Transverse colon (tissue), 4 donors: ENCODE measurements at regions of chr2 and their contacts with region 1.

Region 1: GRCh38 chr2:100416935-100417710 is at the start of gene CHST10:
- DNase-seq: peak; percentile 33
- H3K4me3 ChIP-seq: peak within 1 kb of the TSS; percentile 54 to 78 (median 68)
- H3K27ac ChIP-seq: peak within 1 kb of the TSS; percentile 73 to 84 (median 78)
- H3K4me1 ChIP-seq: peaks cover 0 to 17% (median 6%) of the 10 kb centered on the region in 4 donors
- H3K27me3 ChIP-seq: peaks cover 21% of the 10 kb centered on the region
- CTCF ChIP-seq: no peak
- EP300 ChIP-seq: no peak
- POLR2A ChIP-seq: no peak
- total RNA-seq, gene CHST10: 1.1 to 7.8 (median 4.0) TPM

Region 2: GRCh38 chr2:100352521-100352920 is 64.6 kb before region 1 on chr2:
- in situ Hi-C with region 1: no loop called
- intact Hi-C with region 1: no loop called
- DNase-seq: no peak
- H3K4me3 ChIP-seq: no peak overlapping the region
- H3K27ac ChIP-seq: no peak overlapping the region
- H3K4me1 ChIP-seq: no peaks in the 10 kb centered on the region
- H3K27me3 ChIP-seq: no peaks in the 10 kb centered on the region
- CTCF ChIP-seq: no peak
- EP300 ChIP-seq: no peak
- POLR2A ChIP-seq: no peak

Region 3: DNA sequence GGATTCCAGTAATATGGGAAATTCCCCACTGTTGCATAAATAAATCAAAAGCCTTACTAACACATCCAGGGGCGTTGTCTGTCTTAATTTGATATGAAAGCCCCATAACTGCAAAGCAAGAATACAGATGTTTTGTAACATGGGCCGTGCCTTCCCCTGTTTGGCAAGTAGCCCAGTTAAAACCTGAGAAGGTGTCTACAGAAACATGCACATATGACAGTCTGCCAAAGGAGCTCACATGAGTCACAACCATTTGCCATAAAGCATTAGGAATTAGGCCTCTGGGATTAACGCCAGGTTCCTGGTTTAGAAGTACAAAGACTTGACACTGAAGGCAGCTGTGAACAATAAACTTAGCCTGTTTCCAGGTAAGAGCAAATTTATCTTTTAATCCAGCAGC is 51.7 kb before region 1 on chr2:
- in situ Hi-C with region 1: no loop called
- intact Hi-C with region 1: loop called (anchors 2 kb)
- DNase-seq: no peak
- H3K4me3 ChIP-seq: no peak overlapping the region
- H3K27ac ChIP-seq: no peak overlapping the region
- H3K4me1 ChIP-seq: no peaks in the 10 kb centered on the region
- H3K27me3 ChIP-seq: no peaks in the 10 kb centered on the region
- CTCF ChIP-seq: no peak
- EP300 ChIP-seq: no peak
- POLR2A ChIP-seq: no peak

Region 4: DNA sequence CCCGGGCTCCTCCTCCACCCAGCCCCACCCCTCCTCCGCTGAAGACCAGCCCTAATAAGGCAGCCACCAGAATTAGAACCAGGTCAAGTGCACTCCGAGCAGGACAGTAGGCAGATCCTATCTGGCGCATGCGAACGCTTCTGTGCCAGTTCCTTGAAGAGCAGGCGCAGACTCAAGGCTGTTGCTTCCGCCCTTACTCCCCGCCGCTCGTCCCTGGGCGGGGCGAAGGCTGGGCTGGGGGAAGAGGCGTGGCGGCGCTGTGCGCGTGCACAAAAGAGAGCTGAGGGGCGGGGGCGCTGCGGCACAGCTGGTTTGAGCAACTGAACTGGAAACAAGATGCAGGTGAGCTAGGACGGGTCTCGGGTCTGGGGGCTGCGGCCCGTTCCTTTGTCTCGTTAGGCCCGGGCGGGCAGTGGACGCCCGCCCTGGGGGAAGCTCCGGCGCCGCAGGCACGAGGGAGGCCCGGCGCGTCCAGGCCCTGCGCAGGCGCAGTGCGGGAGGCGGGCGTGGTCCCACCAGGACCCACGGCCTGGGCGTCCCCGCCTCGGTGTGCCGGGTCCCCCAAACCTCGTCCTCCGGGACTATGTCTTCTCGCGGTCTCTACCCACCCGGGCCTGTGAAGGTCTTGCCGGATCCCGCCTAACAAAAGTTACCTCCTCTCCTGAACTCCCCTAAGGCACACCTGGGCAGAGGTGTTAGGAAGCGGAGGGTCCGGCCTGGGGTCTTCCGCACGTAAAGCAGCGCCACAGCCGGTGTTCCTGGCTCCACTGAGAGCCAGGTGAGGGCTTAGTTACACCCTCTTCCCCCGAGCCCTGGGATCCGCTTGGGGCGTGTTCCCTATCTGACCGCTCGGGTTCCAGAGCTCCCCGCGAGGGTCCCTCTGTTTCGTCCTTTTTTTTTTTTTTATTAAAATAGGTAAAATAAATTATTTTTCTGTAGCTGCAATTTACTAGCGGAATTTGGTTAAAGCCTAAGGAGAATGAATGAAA is 145.9 kb after region 1 on chr2 and contains the start of gene PDCL3:
- in situ Hi-C with region 1: no loop called
- intact Hi-C with region 1: loop called (anchors 5 kb)
- DNase-seq: peak; percentile 96
- H3K4me3 ChIP-seq: peak within 1 kb of the TSS; percentile 63 to 73 (median 66)
- H3K27ac ChIP-seq: peak within 1 kb of the TSS; percentile 94 to 96 (median 95)
- H3K4me1 ChIP-seq: peaks cover 0 to 16% (median 11%) of the 10 kb centered on the region in 4 donors
- H3K27me3 ChIP-seq: no peaks in the 10 kb centered on the region
- CTCF ChIP-seq: peak in 1 of 5 experiments; percentile 25
- EP300 ChIP-seq: no peak
- POLR2A ChIP-seq: peak; percentile 70
- total RNA-seq, gene PDCL3: 2.2 to 17.3 (median 15.8) TPM in 3 of 4 donors, not detected in the other

Region 5: DNA sequence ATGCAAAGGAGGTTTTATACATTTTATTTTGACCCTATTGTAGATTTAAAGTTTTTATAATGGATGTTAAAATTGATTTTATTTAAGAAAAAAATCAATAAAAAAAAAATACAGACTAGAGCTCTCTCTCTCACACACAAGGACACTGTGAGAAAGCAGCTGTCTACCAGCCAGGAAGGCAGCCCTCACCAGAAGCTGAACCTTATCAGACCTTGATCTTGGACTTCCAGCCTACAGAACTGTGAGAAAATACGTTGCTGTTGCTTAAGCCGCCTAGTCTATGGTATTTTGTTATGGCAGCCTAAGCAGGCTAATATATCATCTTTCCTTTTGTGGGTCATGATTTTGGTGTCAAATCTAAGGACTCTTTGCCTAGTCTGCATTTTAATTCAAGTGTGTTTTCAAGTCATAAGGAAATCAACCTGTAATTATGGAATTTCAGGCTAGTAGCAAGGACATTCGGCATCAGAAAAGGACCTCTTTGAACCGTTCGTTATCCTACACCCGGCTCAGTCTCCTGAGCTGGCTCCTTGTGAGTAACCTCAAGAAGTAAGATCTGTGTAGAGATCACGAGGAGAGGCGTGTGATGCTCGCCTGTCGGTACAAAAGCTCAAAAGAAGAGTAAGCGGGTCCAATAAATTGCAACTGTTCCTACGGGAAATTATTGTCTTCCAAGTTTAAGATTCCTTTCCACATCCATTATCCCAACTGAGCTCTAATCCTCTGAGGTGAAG is 243.9 kb after region 1 on chr2:
- in situ Hi-C with region 1: no loop called
- intact Hi-C with region 1: no loop called
- DNase-seq: no peak
- H3K4me3 ChIP-seq: no peak overlapping the region
- H3K27ac ChIP-seq: no peak overlapping the region
- H3K4me1 ChIP-seq: no peaks in the 10 kb centered on the region
- H3K27me3 ChIP-seq: no peaks in the 10 kb centered on the region
- CTCF ChIP-seq: no peak
- EP300 ChIP-seq: no peak
- POLR2A ChIP-seq: no peak

Region 6: DNA sequence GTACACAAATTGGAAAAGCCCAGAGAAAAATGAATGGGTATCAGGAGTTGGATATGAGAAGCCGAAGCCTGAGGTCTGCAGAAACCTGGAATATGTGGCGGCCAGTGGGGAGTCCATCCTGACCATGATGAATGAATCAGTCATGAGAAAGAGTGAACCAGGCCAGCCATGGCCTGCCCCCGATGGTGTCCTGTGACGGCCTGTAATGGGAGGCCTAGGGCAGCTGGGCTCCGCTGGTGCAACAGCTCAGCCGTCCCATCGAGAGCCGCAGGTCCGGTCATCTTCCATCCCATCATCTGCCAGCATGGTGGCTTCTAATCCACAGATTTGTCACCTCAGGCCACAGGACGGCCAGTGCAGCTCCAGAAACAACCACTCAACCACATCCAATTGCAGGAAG is 262.1 kb after region 1 on chr2:
- in situ Hi-C with region 1: no loop called
- intact Hi-C with region 1: no loop called
- DNase-seq: no peak
- H3K4me3 ChIP-seq: no peak overlapping the region
- H3K27ac ChIP-seq: no peak overlapping the region
- H3K4me1 ChIP-seq: no peaks in the 10 kb centered on the region
- H3K27me3 ChIP-seq: no peaks in the 10 kb centered on the region
- CTCF ChIP-seq: no peak
- EP300 ChIP-seq: no peak
- POLR2A ChIP-seq: no peak

Region 7: DNA sequence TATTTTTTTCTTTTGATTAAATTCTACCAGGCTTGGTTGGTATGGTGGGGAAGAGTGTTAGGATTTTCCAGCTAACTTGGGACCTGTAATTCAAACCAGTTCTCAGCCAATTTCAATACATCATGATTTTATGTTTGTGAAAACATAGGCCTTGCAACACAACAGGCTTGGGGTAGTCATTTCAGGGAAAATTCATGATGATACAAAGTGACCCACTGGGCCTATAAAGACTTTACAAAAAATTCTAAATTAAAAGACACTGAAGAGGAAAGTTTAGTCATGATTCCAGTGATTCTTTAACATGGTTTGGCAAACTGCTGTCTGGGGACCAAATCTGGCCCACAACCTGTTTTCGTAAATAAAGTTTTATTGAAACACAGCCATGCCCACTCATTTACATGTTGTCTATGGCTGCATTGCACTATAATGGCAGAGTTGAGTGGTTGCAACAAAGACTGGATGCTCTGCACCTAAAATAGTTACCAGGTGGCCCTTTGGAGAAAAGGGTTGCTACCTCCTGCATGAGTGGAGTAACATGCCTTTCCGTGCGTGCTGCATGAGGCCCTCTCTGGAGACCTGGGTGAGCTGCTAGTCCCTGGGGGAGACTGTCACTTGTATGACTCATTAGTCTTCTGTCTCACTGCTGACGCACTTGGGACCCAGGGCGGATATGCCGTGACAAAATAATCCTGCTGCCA is 476.4 kb after region 1 on chr2:
- in situ Hi-C with region 1: no loop called
- intact Hi-C with region 1: no loop called
- DNase-seq: no peak
- H3K4me3 ChIP-seq: no peak overlapping the region
- H3K27ac ChIP-seq: no peak overlapping the region
- H3K4me1 ChIP-seq: peaks cover 0 to 22% (median 12%) of the 10 kb centered on the region in 4 donors
- H3K27me3 ChIP-seq: no peaks in the 10 kb centered on the region
- CTCF ChIP-seq: no peak
- EP300 ChIP-seq: no peak
- POLR2A ChIP-seq: no peak